Naive thymus-derived CD4-positive, alpha-beta T cell (primary cell): ENCODE measurements at regions of chr11 and their contacts with region 1.

Region 1: DNA sequence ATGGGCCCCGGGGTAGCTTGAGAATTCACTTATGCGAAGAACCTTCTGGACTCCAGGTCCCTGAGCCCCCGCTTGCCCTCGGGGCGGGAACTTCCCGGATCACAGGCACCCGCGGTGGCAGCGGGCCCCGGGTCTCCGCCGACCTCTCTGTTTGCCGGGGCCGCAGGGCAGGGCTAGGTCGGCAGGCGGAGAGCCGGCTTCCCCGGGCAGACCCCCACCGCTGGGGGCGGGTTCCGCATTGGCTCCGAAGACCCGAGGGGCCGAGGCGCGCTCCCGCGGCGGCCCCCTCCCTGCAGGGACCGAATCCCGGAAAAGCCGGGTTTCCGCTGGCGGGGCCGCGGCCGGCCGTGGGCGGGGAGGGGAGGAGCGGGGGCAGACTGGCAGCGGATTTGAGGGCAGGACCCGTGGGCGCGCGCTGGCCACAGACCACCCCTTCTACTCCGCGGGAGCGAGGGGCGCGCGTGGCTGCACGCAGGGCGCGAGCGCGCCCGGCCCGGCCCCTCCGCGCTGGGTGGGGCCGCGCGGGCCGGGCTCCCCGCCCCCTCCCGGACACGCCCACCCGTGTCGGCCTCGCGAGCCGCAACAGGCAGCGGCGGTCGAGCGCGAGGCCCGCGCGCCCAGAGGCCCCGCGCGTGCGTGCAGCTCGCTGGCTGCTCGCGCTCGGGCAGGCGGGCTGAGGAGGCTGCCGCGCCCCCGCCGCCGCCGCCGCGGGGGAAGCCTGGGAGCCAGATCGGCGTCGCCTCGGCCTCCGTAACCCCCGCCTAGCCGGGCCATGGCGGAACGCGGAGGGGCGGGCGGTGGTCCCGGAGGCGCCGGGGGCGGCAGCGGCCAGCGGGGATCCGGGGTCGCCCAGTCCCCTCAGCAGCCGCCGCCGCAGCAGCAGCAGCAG is at the start of gene PACS1:
- DNase-seq: peak; percentile 64 to 85 (median 70)
- ATAC-seq: peak; percentile 85
- H3K4me3 ChIP-seq: peak within 1 kb of the TSS; percentile 69
- H3K4me3 Mint-ChIP-seq: peak within 1 kb of the TSS; percentile 91 to 100 (median 98)
- H3K27ac ChIP-seq: peak within 1 kb of the TSS; percentile 84
- H3K27ac Mint-ChIP-seq: peak within 1 kb of the TSS; percentile 90 to 99 (median 97)
- H3K4me1 ChIP-seq: peaks cover 23 to 24% of the 10 kb centered on the region in 2 donors
- H3K4me1 Mint-ChIP-seq: peaks cover 54 to 73% (median 63%) of the 10 kb centered on the region in 7 donors
- H3K27me3 ChIP-seq: no peaks in the 10 kb centered on the region
- H3K27me3 Mint-ChIP-seq: no peaks in the 10 kb centered on the region
- total RNA-seq, gene PACS1: 100 to 314 (median 252) TPM

Region 2: DNA sequence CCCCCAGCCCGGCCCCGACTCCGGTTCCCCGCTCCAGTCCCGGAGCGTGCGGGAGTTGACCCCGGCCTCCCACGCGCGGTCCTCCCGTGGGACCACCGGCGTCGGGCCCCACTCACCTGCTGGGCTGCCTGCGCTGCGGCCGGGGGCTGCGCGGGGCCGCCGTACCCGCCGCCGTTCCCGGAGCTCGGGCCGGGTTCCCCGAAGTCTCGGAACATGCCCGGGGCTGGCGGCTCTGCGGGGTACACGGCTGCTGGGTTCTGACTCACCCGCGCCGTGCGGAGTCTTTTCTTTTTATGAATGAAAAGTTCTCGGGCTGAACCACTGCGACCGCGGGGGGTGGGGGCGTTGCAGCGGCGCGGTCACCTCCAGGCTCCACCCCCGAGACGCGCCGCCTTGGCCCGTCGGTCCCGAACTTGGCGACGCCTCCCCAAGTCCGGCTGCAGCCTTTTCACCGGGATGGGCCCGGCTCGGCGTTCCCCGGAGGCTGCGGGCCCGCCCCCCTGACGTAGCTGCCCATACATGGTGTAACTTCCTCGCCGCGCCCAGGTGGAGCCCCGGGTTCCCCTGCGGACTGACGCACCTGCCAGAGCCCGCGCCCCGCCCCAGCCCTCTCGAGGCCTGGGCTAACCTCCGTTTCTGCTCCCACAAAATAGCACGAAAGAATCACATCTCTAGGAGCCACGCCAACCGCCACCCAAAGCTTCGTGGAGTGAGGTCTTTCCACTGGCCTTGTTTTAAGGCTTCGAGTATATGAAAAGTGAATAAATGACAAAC is 169.6 kb before region 1 on chr11 and contains the start of gene FOSL1:
- CTCF ChIA-PET with region 1: no interaction called
- POLR2A ChIA-PET with region 1: no interaction called
- intact Hi-C with region 1: no loop called
- DNase-seq: peak; percentile 83 to 97 (median 89)
- ATAC-seq: peak; percentile 95
- H3K4me3 ChIP-seq: peak within 1 kb of the TSS; percentile 51
- H3K4me3 Mint-ChIP-seq: peak within 1 kb of the TSS; percentile 64 to 81 (median 74)
- H3K27ac ChIP-seq: peak within 1 kb of the TSS; percentile 47
- H3K27ac Mint-ChIP-seq: peak within 1 kb of the TSS in 6 of 9 donors; percentile 43 to 88 (median 80)
- H3K4me1 ChIP-seq: peaks cover 17 to 19% of the 10 kb centered on the region in 2 donors
- H3K4me1 Mint-ChIP-seq: peaks cover 6 to 42% (median 10%) of the 10 kb centered on the region in 7 donors
- H3K27me3 ChIP-seq: peaks cover 0 to 6% of the 10 kb centered on the region in 2 donors
- H3K27me3 Mint-ChIP-seq: peaks cover 0 to 11% (median 3%) of the 10 kb centered on the region in 5 donors
- total RNA-seq, gene FOSL1: 2.8 to 25.7 (median 4.0) TPM in 3 of 5 experiments, not detected in the others

Region 3: DNA sequence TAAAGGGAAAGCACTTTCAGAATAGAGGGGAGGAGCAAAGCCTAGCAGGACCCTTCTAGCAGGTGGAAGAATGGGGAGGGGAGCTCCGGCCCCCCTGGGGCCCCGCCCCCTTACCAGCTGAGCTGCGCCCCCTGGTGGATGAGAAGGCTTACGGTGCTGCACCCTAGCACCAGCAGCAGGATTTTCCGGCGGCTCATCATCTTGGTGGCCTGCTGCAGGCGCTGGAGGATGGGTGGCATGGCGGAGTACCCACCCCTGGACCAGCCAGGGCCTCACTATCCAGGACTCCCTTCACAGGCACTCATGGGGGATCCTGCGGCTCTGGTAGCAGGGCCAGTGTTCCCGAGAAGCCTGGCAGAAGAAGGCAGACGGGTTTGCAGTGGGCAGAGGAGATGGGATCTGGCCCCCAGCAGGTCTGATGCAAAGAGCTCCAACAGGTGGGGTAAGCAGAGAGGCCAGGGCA is 24.8 kb before region 1 on chr11:
- CTCF ChIA-PET with region 1: interaction called, 5 read pairs
- POLR2A ChIA-PET with region 1: no interaction called
- intact Hi-C with region 1: loop called in 1 of 2 experiments (anchors 2 kb)
- DNase-seq: peak; percentile 70 to 89 (median 81)
- ATAC-seq: peak; percentile 98
- H3K4me3 ChIP-seq: no peak overlapping the region
- H3K4me3 Mint-ChIP-seq: peak overlapping the region in 3 of 10 donors; percentile 12 to 29 (median 17)
- H3K27ac ChIP-seq: no peak overlapping the region
- H3K27ac Mint-ChIP-seq: peak overlapping the region in 2 of 9 donors; percentile 17 to 34
- H3K4me1 ChIP-seq: peaks cover 0 to 9% of the 10 kb centered on the region in 2 donors
- H3K4me1 Mint-ChIP-seq: peaks cover 4 to 23% (median 15%) of the 10 kb centered on the region in 7 donors
- H3K27me3 ChIP-seq: no peaks in the 10 kb centered on the region
- H3K27me3 Mint-ChIP-seq: peaks cover 0 to 19% (median 0%) of the 10 kb centered on the region in 5 donors

Region 4: GRCh38 chr11:66081505-66081904 is 11.5 kb after region 1 on chr11:
- CTCF ChIA-PET with region 1: interaction called, 67 read pairs
- POLR2A ChIA-PET with region 1: interaction called, 139 read pairs
- intact Hi-C with region 1: loop called (anchors 1 kb)
- DNase-seq: peak; percentile 38 to 91 (median 86)
- ATAC-seq: peak; percentile 98
- H3K4me3 ChIP-seq: peak overlapping the region; percentile 38
- H3K4me3 Mint-ChIP-seq: peak overlapping the region; percentile 61 to 95 (median 89)
- H3K27ac ChIP-seq: peak overlapping the region; percentile 80
- H3K27ac Mint-ChIP-seq: peak overlapping the region; percentile 93 to 100 (median 98)
- H3K4me1 ChIP-seq: peaks cover 56 to 77% of the 10 kb centered on the region in 2 donors
- H3K4me1 Mint-ChIP-seq: peaks cover 62 to 98% (median 86%) of the 10 kb centered on the region in 7 donors
- H3K27me3 ChIP-seq: no peaks in the 10 kb centered on the region
- H3K27me3 Mint-ChIP-seq: no peaks in the 10 kb centered on the region

Region 5: DNA sequence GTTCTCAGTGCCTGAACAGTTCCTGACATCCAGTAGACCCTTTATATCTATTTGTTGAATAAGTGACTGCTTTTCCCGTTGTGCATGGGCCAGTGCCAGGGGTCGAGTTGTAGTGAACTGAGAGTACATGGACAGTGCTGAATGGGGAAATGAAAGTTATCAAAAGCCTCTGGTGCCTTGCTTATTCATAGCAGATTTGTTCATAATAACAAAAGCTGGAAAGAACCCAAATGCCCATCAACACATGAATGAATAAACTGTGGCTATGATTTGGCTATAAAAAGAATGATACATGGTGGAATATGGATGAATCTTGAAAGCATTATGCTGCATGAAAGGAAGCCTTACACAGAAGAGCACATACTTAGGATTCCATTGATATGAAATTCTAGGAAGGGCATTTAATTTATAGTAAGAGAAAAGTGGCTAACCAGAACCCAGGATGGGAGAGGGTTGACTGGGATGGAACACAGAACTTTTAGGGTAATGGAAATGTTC is 42.7 kb after region 1 on chr11:
- CTCF ChIA-PET with region 1: interaction called, 28 read pairs
- POLR2A ChIA-PET with region 1: interaction called, 77 read pairs
- intact Hi-C with region 1: loop called in 1 of 2 experiments (anchors 1 kb)
- DNase-seq: no peak
- ATAC-seq: peak; percentile 22
- H3K4me3 ChIP-seq: no peak overlapping the region
- H3K4me3 Mint-ChIP-seq: peak overlapping the region; percentile 42 to 81 (median 70)
- H3K27ac ChIP-seq: peak overlapping the region; percentile 55
- H3K27ac Mint-ChIP-seq: peak overlapping the region; percentile 80 to 95 (median 90)
- H3K4me1 ChIP-seq: peaks cover 76 to 89% of the 10 kb centered on the region in 2 donors
- H3K4me1 Mint-ChIP-seq: peaks cover 74 to 100% (median 90%) of the 10 kb centered on the region in 7 donors
- H3K27me3 ChIP-seq: no peaks in the 10 kb centered on the region
- H3K27me3 Mint-ChIP-seq: no peaks in the 10 kb centered on the region

Region 6: DNA sequence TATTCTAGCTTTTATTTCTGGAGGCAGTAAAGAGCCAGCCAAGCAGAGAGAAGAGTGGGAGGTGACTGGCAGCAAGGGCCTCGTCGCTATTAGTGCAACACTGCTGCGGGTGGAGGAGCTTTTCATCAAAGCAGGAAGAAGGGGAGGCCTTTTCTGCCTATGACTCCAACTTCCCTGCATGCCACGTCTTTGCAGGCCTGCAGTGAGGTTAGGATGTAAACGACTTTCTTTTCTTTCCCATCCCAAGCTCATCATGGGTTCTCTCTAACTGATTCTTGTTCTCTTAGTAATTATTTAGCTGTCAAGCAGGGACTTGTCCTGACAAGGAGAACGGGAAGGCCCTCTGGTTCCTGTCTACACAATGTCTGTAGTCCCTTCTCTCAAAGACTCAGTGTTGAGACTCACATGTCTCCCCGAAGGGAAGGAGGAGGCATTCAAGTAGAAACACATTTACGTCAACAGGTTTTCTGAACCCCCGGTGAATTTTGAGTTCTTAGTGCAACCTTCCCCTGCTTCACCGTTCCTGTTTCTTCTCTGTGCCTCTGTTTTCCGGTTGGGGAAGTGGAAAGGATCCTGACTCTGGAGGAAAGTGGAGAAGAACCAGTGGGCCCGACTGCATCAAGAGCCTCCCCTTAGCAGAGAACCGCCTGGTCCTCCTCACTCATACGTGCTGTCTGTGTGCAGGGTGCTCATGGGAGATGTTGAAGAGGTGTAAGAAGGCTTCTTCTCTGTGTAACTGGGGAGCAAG is 57.0 kb after region 1 on chr11:
- CTCF ChIA-PET with region 1: interaction called, 10 read pairs
- POLR2A ChIA-PET with region 1: interaction called, 9 read pairs
- intact Hi-C with region 1: loop called (anchors 1 to 2 kb)
- DNase-seq: peak in 8 of 9 donors; percentile 45 to 74 (median 65)
- ATAC-seq: peak; percentile 95
- H3K4me3 ChIP-seq: peak overlapping the region; percentile 36
- H3K4me3 Mint-ChIP-seq: peak overlapping the region; percentile 60 to 88 (median 83)
- H3K27ac ChIP-seq: peak overlapping the region; percentile 74
- H3K27ac Mint-ChIP-seq: peak overlapping the region; percentile 82 to 100 (median 97)
- H3K4me1 ChIP-seq: peaks cover 20 to 65% of the 10 kb centered on the region in 2 donors
- H3K4me1 Mint-ChIP-seq: peaks cover 53 to 89% (median 84%) of the 10 kb centered on the region in 7 donors
- H3K27me3 ChIP-seq: no peaks in the 10 kb centered on the region
- H3K27me3 Mint-ChIP-seq: no peaks in the 10 kb centered on the region

Region 7: DNA sequence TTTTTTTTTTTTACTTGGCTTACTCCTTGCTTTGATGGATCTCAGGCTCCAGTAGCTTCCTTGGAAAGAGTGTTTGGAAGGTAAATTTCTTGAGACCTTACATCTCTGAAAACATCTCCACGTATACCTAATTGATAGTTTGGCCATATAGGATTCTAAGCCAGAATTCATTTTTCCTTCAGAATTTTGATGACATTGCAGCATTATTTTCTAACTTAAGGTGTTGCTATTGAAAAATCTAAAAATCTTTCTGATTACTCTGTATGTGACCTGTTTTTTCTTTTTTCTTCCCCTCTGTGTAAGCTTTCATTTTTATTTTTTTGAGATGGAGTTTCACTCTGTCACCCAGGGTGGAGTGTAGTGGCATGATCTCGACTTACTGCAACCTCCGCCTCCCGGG is 682.2 kb after region 1 on chr11:
- CTCF ChIA-PET with region 1: no interaction called
- POLR2A ChIA-PET with region 1: no interaction called
- intact Hi-C with region 1: no loop called
- DNase-seq: no peak
- ATAC-seq: no peak
- H3K4me3 ChIP-seq: no peak overlapping the region
- H3K4me3 Mint-ChIP-seq: no peak overlapping the region
- H3K27ac ChIP-seq: no peak overlapping the region
- H3K27ac Mint-ChIP-seq: peak overlapping the region in 1 of 9 donors; percentile 23
- H3K4me1 ChIP-seq: no peaks in the 10 kb centered on the region
- H3K4me1 Mint-ChIP-seq: peaks cover 0 to 6% (median 0%) of the 10 kb centered on the region in 7 donors
- H3K27me3 ChIP-seq: no peaks in the 10 kb centered on the region
- H3K27me3 Mint-ChIP-seq: peaks cover 0 to 2% (median 0%) of the 10 kb centered on the region in 5 donors